Vagina (tissue), 2 donors: ENCODE measurements at regions of chr10 and their contacts with region 1.

Region 1: DNA sequence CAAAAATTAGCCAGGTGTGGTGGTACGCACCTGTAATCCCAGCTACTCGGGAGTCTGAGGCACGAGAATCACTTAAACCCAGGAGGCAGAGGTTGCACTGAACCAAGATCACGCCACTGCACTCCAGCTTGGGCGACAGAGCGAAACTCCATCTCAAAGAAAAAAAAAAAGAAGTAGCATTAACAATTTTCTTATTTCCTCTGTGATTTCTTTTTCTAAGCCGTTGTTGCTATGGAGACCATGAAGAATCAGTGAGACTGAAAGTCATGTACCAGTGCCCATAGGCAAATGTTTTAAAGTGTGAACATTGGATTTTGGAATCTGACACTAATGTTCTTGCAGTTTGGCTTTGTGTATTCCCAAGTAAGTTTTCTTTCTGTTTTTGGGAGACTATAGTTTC is 18.4 kb upstream of the MAP3K8 start:
- DNase-seq: no peak
- H3K4me3 ChIP-seq: no peak overlapping the region
- H3K27ac ChIP-seq: no peak overlapping the region
- H3K4me1 ChIP-seq: peaks cover 6% of the 10 kb centered on the region
- H3K27me3 ChIP-seq: no peaks in the 10 kb centered on the region
- CTCF ChIP-seq: no peak
- POLR2A ChIP-seq: no peak

Region 2: DNA sequence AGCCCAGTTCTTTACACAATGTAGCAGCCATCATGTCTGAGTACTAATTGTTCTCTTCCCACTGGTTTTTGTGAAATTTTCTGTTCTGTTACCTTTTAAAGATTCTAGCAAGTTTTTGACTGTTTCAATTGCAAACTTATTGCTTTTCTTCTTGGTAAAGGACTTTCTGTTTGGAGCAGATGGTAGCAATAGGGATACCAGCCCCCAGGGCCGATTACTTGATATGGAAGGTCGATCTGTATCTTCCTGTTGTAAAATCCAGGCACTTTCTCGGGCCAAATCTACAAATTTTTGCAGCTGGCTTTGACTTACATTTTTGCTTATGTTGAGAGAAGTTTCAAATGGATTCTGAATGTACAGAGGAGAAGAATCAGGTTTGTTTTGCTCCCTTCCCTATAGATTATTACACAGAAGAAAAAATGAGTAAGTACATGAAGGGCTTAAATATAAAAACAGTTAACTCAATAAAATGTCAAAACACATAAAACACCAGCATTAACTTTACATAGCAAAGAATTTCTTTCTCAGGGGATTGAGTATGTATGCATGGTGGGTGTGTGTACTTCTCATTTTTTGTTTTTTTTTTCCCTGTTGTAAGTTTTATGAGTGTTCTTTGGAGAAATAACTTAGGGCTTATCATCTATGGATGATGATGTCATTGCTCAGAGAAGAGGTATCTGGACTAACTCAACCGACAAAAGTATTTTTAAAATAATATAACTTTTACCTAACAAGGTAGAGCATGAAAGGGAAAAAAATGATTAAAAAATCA is 101.8 kb before region 1 on chr10:
- intact Hi-C with region 1: no loop called
- DNase-seq: no peak
- H3K4me3 ChIP-seq: no peak overlapping the region
- H3K27ac ChIP-seq: no peak overlapping the region
- H3K4me1 ChIP-seq: no peaks in the 10 kb centered on the region
- H3K27me3 ChIP-seq: no peaks in the 10 kb centered on the region
- CTCF ChIP-seq: no peak
- POLR2A ChIP-seq: no peak

Region 3: GRCh38 chr10:30534465-30535144 is 119.0 kb after region 1 on chr10:
- intact Hi-C with region 1: loop called (anchors 5 kb)
- DNase-seq: no peak
- H3K4me3 ChIP-seq: no peak overlapping the region
- H3K27ac ChIP-seq: no peak overlapping the region
- H3K4me1 ChIP-seq: no peaks in the 10 kb centered on the region
- H3K27me3 ChIP-seq: no peaks in the 10 kb centered on the region
- CTCF ChIP-seq: peak; percentile 83 to 88 (median 84)
- POLR2A ChIP-seq: no peak